ENCODE measurements at regions of chr6 and their contacts with region 1.

Region 1: DNA sequence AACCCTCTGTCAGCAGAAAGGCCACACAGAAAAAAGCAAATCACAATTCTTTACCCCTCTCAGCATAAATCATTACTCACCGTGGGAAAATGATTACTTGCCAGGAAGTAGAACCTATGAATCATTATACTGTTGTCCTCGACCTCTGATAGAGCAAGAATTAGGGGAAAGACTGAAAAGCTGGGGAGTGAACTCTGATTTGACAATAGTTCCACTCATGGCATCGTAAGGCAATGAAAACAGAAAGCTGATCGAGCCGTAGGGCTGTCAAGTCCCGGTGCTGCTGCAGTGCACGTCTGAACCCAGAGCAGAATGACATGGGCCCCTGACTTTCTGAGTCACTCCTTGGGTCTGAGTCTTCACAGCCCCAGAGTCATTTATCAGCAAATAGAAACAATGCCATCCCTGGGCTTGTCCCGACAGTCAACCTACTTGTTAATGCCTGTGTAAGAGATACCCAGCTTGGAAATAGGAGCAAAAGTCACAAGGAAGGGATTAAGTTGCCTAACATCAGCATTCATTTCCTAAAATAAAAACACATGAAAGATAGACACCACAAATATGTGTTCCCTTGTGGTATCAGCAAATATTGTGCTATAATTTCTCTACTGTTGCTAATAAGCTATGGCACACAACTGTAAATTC is 224.8 kb upstream of the MARCKS start:
- DNase-seq: no peak
- H3K4me3 ChIP-seq: peak overlapping the region in 3 of 4 donors; percentile 13 to 44 (median 18)
- H3K27ac ChIP-seq: peak overlapping the region; percentile 76 to 88 (median 82)
- H3K4me1 ChIP-seq: peaks cover 28 to 83% (median 33%) of the 10 kb centered on the region in 3 donors
- H3K27me3 ChIP-seq: no peaks in the 10 kb centered on the region
- CTCF ChIP-seq: peak in 1 of 6 experiments; percentile 14
- POLR2A ChIP-seq: peak in 1 of 4 donors; percentile 46

Region 2: GRCh38 chr6:113858480-113859348 is 226.4 kb after region 1 on chr6:
- intact Hi-C with region 1: loop called (anchors 10 kb)
- DNase-seq: peak; percentile 44
- H3K4me3 ChIP-seq: peak overlapping the region; percentile 55 to 80 (median 64)
- H3K27ac ChIP-seq: peak overlapping the region; percentile 94 to 97 (median 95)
- H3K4me1 ChIP-seq: peaks cover 0 to 54% (median 5%) of the 10 kb centered on the region in 3 donors
- H3K27me3 ChIP-seq: peaks cover 0 to 6% (median 0%) of the 10 kb centered on the region in 4 donors
- CTCF ChIP-seq: peak; percentile 77 to 100 (median 98)
- POLR2A ChIP-seq: peak in 3 of 4 donors; percentile 56 to 85 (median 79)